ENCODE measurements at regions of chr3 and their contacts with region 1.

Region 1: GRCh38 chr3:61381745-61382392 is 130.6 kb upstream of the FHIT start:
- DNase-seq: no peak

Region 2: DNA sequence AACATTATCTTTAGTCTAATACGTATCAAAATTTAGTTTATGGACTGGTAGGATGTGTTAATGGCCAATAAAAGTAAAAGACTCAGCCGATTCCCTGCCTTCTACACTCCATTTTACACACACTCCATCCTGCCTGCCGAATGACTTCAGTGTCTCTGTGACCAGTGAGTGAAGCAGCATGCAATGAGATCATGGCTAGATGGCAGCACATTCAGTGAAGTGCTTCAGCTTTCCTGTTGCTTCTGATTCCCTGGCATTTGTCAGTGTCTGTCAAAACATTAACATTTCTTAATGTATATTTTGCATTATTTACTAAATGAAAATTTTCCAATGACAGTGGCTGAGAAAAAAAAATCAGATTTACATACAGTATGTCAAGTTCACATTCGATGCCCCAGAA is 542.6 kb before region 1 on chr3:
- intact Hi-C with region 1: loop called (anchors 10 kb)
- DNase-seq: peak in 6 of 10 donors; percentile 7 to 79 (median 22)

Region 3: GRCh38 chr3:62109534-62109933 is 727.7 kb after region 1 on chr3:
- intact Hi-C with region 1: no loop called
- DNase-seq: peak in 3 of 10 donors; percentile 25 to 86 (median 77)